ENCODE measurements at regions of chr21 and their contacts with region 1.

Region 1: GRCh38 chr21:34986561-34987500 is 62.3 kb downstream of the RUNX1 start:
- DNase-seq: peak; percentile 72
- ATAC-seq: peak; percentile 95
- H3K4me3 ChIP-seq: peak overlapping the region; percentile 5; the same call in 1 of the 2 replicates
- H3K27ac ChIP-seq: no peak overlapping the region; the same call in 1 of the 2 replicates
- H3K4me1 ChIP-seq: peaks cover 27% of the 10 kb centered on the region
- H3K27me3 ChIP-seq: peaks cover 0 to 7% of the 10 kb centered on the region in 2 experiments; a peak in 3 of 4 replicates
- CTCF ChIP-seq: 0 out of 6 replicates have a peak, but pooled peaks of 1 of the 3 experiments have one; percentile 10
- EP300 ChIP-seq: peak; percentile 35 to 56; a peak in 2 of 4 replicates
- POLR2A ChIP-seq: no peak
- RAD21 ChIP-seq: peak; percentile 20; the same call in 1 of the 2 replicates

Region 2: GRCh38 chr21:35035581-35035980 is 48.8 kb after region 1 on chr21:
- CTCF ChIA-PET with region 1: no interaction called
- POLR2A ChIA-PET with region 1: no interaction called
- RAD21 ChIA-PET with region 1: no interaction called
- SMC1A ChIA-PET with region 1: no interaction called
- in situ Hi-C with region 1: no loop called
- intact Hi-C with region 1: no loop called
- DNase-seq: no peak
- ATAC-seq: no peak
- H3K4me3 ChIP-seq: no peak overlapping the region
- H3K27ac ChIP-seq: no peak overlapping the region
- H3K4me1 ChIP-seq: peaks cover 10% of the 10 kb centered on the region
- H3K27me3 ChIP-seq: peaks cover 0 to 4% of the 10 kb centered on the region in 2 experiments; a peak in 2 of 4 replicates
- CTCF ChIP-seq: no peak
- EP300 ChIP-seq: no peak
- POLR2A ChIP-seq: no peak
- RAD21 ChIP-seq: no peak

Region 3: DNA sequence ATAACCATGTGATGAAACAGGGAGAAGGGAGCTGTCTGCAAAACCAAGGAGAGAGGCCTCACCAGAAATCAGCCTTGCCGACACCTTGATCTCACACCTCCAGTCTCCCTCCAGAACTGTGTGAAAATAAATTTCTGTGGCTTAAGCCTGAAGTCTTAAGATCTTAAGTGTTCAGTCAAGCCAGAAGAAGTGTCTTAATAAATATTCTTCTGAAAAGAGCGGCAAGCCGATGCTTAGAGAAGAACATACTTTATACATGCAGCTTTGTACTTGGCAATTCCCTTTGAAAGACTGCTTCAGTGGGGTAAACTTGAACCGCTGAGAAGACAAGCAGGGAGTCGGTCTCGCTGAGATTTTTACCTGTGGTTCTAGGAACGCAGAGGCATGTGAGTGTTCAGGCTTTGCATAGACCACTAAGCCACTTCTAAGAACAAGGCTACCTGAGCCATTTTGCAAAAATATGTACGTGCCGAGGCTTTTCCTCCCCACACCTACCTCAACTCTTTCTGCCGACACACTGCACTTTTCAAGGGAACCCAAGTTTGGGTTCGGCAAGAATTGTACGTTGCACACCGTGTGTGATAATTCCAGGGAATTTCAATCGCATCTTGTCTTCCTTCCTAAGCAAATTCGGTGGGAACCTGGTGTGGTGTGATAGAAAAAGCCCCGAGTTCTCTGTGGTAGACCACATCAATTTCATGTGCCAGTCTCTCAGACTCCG is 58.9 kb after region 1 on chr21:
- CTCF ChIA-PET with region 1: no interaction called
- POLR2A ChIA-PET with region 1: no interaction called
- RAD21 ChIA-PET with region 1: no interaction called
- SMC1A ChIA-PET with region 1: no interaction called
- in situ Hi-C with region 1: no loop called
- intact Hi-C with region 1: loop called (anchors 2 kb)
- DNase-seq: no peak
- ATAC-seq: no peak
- H3K4me3 ChIP-seq: peak overlapping the region; percentile 48; the same call in 1 of the 2 replicates
- H3K27ac ChIP-seq: peak overlapping the region; percentile 78
- H3K4me1 ChIP-seq: peaks cover 85% of the 10 kb centered on the region
- H3K27me3 ChIP-seq: peaks cover 0 to 1% of the 10 kb centered on the region in 2 experiments; a peak in 1 of 4 replicates
- CTCF ChIP-seq: no peak
- EP300 ChIP-seq: no peak
- POLR2A ChIP-seq: 0 out of 2 replicates have a peak, but pooled peaks have one; percentile 27
- RAD21 ChIP-seq: no peak